Heart right ventricle (tissue), 16 donors: ENCODE measurements at regions of chr3 and their contacts with region 1.

Region 1: DNA sequence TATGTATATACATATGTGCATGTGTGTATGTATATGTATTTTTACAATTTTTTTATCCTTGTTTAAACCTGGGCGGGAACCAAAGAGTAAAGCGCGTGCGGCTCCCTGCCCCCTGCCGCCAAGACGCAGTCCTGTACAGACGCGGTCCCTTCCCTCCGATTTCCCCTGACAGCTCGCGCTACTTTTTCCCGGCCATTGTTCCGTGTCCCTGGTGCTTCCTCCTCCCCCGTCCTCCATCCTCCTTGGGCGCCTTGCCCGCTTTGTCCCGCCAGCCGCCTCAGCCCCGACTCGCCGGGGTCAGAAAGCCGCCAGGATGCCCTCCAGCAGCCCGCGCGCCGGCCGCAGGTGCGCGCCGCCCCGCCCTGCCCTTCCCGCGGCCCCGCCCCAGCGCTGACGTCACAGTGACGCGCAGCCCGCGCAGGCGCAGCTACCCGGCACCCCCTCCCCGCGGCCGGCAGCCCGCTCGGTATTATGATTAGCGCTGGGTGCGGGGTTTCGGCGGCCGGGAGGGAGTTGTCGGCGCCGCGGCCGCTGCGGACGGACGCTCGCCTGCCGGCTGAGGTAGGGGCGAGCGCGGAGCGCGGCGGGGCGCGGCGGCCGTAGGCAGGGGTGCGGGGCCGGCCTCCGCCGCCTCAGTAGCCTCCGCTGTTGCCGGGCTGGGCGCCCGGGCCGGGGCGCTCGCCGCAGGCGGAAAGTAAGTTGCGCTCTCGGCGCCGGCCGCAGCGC is at the start of gene SNRK:
- DNase-seq: peak; percentile 91 to 95
- ATAC-seq: peak; percentile 90 to 98 (median 94)
- H3K4me3 ChIP-seq: peak within 1 kb of the TSS; percentile 38 to 74 (median 68)
- H3K27ac ChIP-seq: peak within 1 kb of the TSS; percentile 89 to 98 (median 93)
- H3K4me1 ChIP-seq: peaks cover 12 to 66% (median 44%) of the 10 kb centered on the region in 9 donors
- H3K27me3 ChIP-seq: no peaks in the 10 kb centered on the region
- CTCF ChIP-seq: peak in 7 of 9 donors; percentile 17 to 70 (median 38)
- total RNA-seq, gene SNRK: 20.9 to 51.9 (median 29.2) TPM

Region 2: GRCh38 chr3:43162230-43163084 is 123.8 kb before region 1 on chr3:
- intact Hi-C with region 1: loop called in 5 of 10 experiments (anchors 1 to 10 kb)
- DNase-seq: no peak
- ATAC-seq: peak; percentile 25 to 91 (median 80)
- H3K4me3 ChIP-seq: peak overlapping the region in 6 of 10 donors; percentile 15 to 24 (median 19)
- H3K27ac ChIP-seq: peak overlapping the region in 8 of 10 donors; percentile 3 to 81 (median 63)
- H3K4me1 ChIP-seq: peaks cover 0 to 20% (median 12%) of the 10 kb centered on the region in 9 donors
- H3K27me3 ChIP-seq: no peaks in the 10 kb centered on the region
- CTCF ChIP-seq: peak; percentile 20 to 75 (median 57)

Region 3: GRCh38 chr3:43215663-43216275 is 70.5 kb before region 1 on chr3:
- intact Hi-C with region 1: loop called in 1 of 10 experiments (anchors 2 kb)
- DNase-seq: no peak
- ATAC-seq: no peak
- H3K4me3 ChIP-seq: no peak overlapping the region
- H3K27ac ChIP-seq: no peak overlapping the region
- H3K4me1 ChIP-seq: peaks cover 0 to 24% (median 11%) of the 10 kb centered on the region in 9 donors
- H3K27me3 ChIP-seq: no peaks in the 10 kb centered on the region
- CTCF ChIP-seq: peak in 2 of 9 donors; percentile 15 to 17

Region 4: GRCh38 chr3:43246976-43247375 is 39.3 kb before region 1 on chr3:
- intact Hi-C with region 1: loop called in 5 of 10 experiments (anchors 2 to 5 kb)
- DNase-seq: peak in 1 of 2 donors; percentile 57
- ATAC-seq: peak; percentile 56 to 93 (median 86)
- H3K4me3 ChIP-seq: no peak overlapping the region
- H3K27ac ChIP-seq: peak overlapping the region in 9 of 10 donors; percentile 46 to 87 (median 70)
- H3K4me1 ChIP-seq: peaks cover 7 to 62% (median 42%) of the 10 kb centered on the region in 9 donors
- H3K27me3 ChIP-seq: no peaks in the 10 kb centered on the region
- CTCF ChIP-seq: no peak

Region 5: GRCh38 chr3:43326891-43327581 is 40.8 kb after region 1 on chr3:
- intact Hi-C with region 1: loop called in 2 of 10 experiments (anchors 5 kb)
- DNase-seq: no peak
- ATAC-seq: peak; percentile 62 to 88 (median 74)
- H3K4me3 ChIP-seq: no peak overlapping the region
- H3K27ac ChIP-seq: peak overlapping the region; percentile 10 to 86 (median 75)
- H3K4me1 ChIP-seq: peaks cover 4 to 86% (median 64%) of the 10 kb centered on the region in 9 donors
- H3K27me3 ChIP-seq: no peaks in the 10 kb centered on the region
- CTCF ChIP-seq: no peak

Region 6: DNA sequence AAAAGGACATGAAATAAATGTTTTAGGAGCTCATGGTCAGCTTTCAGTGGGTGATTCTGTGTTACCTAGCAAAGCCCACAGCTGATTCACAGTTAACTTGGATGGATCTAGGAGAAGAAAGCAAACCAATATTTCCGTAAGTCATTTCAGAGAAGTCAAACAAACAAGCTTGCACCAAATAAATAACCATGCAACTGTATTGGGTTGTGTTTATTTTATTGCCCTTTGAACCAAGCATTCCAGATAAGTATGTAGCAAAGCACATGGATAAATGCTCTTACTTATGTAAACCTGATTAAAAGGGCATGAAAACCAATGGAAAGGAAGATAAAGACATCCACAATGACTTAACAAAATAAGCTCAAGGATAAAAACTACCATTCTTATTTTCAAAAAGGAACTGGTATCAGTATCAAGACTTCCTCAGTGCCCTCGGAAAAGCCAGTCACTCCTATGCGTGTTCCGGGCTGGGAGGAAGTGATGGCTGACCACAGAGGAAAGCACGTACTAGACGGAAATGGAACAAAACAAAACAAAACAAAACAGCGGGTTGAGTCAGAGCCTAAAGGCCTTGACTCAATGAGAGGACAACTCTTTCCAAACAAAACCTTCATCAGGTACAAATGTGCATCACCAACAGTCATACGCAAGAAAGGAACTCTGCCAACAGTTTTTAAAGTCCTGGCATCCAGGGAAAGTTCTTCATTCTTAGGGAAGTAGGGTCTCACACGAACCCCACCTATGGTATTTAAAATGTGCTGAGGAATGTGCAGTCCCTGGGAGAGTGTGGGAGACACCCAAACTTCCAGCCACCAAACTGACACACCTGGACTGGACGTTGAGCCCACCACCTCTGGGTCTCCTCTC is 103.3 kb after region 1 on chr3:
- intact Hi-C with region 1: loop called in 4 of 10 experiments (anchors 5 to 10 kb)
- DNase-seq: peak in 1 of 2 donors; percentile 69
- ATAC-seq: peak; percentile 65 to 85 (median 76)
- H3K4me3 ChIP-seq: no peak overlapping the region
- H3K27ac ChIP-seq: peak overlapping the region; percentile 31 to 93 (median 82)
- H3K4me1 ChIP-seq: peaks cover 3 to 60% (median 41%) of the 10 kb centered on the region in 9 donors
- H3K27me3 ChIP-seq: no peaks in the 10 kb centered on the region
- CTCF ChIP-seq: no peak

Region 7: DNA sequence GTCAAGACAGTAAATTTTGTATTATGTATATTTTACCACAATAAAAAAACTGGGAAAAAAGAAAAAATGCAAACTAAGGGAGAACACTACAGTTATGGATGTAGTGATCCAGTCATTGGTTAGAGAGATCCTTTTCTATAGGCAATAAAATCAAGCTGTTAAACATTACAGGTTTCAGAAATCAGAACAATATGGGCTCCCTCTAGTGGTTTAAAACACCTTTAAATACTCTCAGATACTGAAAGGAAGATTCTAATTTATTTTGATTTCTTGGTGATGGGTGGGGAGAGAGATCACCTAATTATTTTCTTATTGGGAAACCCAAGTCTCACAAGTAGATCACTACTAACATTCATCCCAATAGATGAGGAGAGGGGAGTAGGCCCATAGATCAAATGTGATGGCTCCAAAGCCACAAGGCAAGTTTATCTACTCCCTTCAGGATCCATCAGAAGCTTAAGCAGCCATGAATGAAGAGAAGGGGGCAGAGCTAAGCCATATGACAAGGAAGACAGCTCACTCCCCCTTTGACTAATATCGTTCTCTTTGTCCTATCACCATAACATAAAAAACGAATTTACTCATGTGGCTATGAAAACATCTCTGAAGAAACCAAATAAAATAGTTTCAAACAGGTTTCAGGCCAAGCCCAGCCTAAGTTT is 216.9 kb after region 1 on chr3:
- intact Hi-C with region 1: loop called in 7 of 10 experiments (anchors 2 to 10 kb)
- DNase-seq: no peak
- ATAC-seq: peak in 6 of 8 donors; percentile 23 to 52 (median 39)
- H3K4me3 ChIP-seq: no peak overlapping the region
- H3K27ac ChIP-seq: peak overlapping the region in 3 of 10 donors; percentile 8 to 24 (median 17)
- H3K4me1 ChIP-seq: peaks cover 0 to 35% (median 8%) of the 10 kb centered on the region in 9 donors
- H3K27me3 ChIP-seq: no peaks in the 10 kb centered on the region
- CTCF ChIP-seq: peak; percentile 45 to 78 (median 63)